ENCODE measurements at regions of chr9 and their contacts with region 1.

Region 1: GRCh38 chr9:22244141-22245011 is 202.2 kb upstream of the DMRTA1 start:
- H3K4me3 ChIP-seq: no peak overlapping the region
- H3K27ac ChIP-seq: no peak overlapping the region
- H3K4me1 ChIP-seq: peaks cover 18% of the 10 kb centered on the region
- CTCF ChIP-seq: peak; percentile 22; the same call in 1 of the 2 replicates

Region 2: GRCh38 chr9:21812946-21813568 is 431.3 kb before region 1 on chr9:
- CTCF ChIA-PET with region 1: interaction called, 80 read pairs
- POLR2A ChIA-PET with region 1: no interaction called
- H3K4me3 ChIP-seq: no peak overlapping the region
- H3K27ac ChIP-seq: no peak overlapping the region; the same call in 1 of the 2 replicates
- H3K4me1 ChIP-seq: no peaks in the 10 kb centered on the region
- CTCF ChIP-seq: peak; percentile 71; the same call in 1 of the 2 replicates

Region 3: GRCh38 chr9:22037954-22038690 is 206.3 kb before region 1 on chr9:
- CTCF ChIA-PET with region 1: interaction called, 21 read pairs
- POLR2A ChIA-PET with region 1: no interaction called
- H3K4me3 ChIP-seq: no peak overlapping the region
- H3K27ac ChIP-seq: no peak overlapping the region
- H3K4me1 ChIP-seq: peaks cover 10% of the 10 kb centered on the region; the same call in 1 of the 2 replicates
- CTCF ChIP-seq: no peak

Region 4: DNA sequence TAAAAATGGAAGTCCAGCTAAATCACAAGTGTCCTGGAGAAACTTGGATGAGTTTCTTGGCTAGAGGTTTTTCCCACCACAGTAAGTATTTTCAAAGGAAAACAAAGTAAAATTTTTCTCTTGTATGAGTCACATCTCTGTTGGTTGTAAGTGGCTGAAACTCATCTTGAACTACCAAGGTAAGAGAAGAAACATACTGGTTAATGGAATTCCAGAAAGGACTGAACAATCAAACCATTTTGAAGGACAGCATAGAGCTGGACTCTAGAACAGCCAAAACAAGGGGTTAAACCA is 132.5 kb before region 1 on chr9:
- CTCF ChIA-PET with region 1: interaction called, 14 read pairs
- POLR2A ChIA-PET with region 1: no interaction called
- H3K4me3 ChIP-seq: no peak overlapping the region
- H3K27ac ChIP-seq: no peak overlapping the region
- H3K4me1 ChIP-seq: peaks cover 12% of the 10 kb centered on the region
- CTCF ChIP-seq: no peak

Region 5: GRCh38 chr9:22141906-22142305 is 102.5 kb before region 1 on chr9:
- CTCF ChIA-PET with region 1: interaction called, 24 read pairs
- POLR2A ChIA-PET with region 1: no interaction called
- H3K4me3 ChIP-seq: no peak overlapping the region
- H3K27ac ChIP-seq: peak overlapping the region; percentile 43
- H3K4me1 ChIP-seq: peaks cover 10% of the 10 kb centered on the region; the same call in 1 of the 2 replicates
- CTCF ChIP-seq: no peak

Region 6: DNA sequence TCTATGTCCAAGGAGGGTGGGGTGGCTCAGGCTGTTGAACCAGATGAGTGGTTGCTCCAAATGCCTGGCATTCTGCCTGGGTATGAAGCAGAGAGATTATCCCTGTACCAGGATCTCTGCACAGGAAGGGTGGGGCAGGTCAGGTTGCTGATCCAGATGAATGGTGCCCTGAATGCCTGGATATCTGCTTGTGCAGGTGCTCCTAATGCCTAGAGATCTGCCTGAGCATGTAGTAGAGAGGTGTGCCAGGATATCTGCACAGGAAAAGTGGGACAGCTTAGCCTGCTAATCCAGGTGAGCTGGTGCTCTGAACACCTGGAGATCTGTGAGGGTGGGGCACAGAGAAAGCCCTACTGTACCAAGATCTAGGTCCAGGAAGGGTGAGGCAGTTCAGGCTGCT is 12.7 kb after region 1 on chr9:
- CTCF ChIA-PET with region 1: interaction called, 13 read pairs
- POLR2A ChIA-PET with region 1: no interaction called
- H3K4me3 ChIP-seq: no peak overlapping the region
- H3K27ac ChIP-seq: no peak overlapping the region
- H3K4me1 ChIP-seq: no peaks in the 10 kb centered on the region
- CTCF ChIP-seq: no peak

Region 7: GRCh38 chr9:22307013-22307711 is 62.8 kb after region 1 on chr9:
- CTCF ChIA-PET with region 1: interaction called, 13 read pairs
- POLR2A ChIA-PET with region 1: no interaction called
- H3K4me3 ChIP-seq: no peak overlapping the region
- H3K27ac ChIP-seq: no peak overlapping the region
- H3K4me1 ChIP-seq: no peaks in the 10 kb centered on the region
- CTCF ChIP-seq: peak; percentile 42; the same call in 1 of the 2 replicates

Region 8: GRCh38 chr9:22354699-22355384 is 110.5 kb after region 1 on chr9:
- CTCF ChIA-PET with region 1: no interaction called
- POLR2A ChIA-PET with region 1: no interaction called
- H3K4me3 ChIP-seq: no peak overlapping the region
- H3K27ac ChIP-seq: no peak overlapping the region
- H3K4me1 ChIP-seq: no peaks in the 10 kb centered on the region
- CTCF ChIP-seq: no peak

Measured in HEK293 (cell line).